Left cardiac atrium (tissue), 4 donors: ENCODE measurements at regions of chr21 and their contacts with region 1.

Region 1: DNA sequence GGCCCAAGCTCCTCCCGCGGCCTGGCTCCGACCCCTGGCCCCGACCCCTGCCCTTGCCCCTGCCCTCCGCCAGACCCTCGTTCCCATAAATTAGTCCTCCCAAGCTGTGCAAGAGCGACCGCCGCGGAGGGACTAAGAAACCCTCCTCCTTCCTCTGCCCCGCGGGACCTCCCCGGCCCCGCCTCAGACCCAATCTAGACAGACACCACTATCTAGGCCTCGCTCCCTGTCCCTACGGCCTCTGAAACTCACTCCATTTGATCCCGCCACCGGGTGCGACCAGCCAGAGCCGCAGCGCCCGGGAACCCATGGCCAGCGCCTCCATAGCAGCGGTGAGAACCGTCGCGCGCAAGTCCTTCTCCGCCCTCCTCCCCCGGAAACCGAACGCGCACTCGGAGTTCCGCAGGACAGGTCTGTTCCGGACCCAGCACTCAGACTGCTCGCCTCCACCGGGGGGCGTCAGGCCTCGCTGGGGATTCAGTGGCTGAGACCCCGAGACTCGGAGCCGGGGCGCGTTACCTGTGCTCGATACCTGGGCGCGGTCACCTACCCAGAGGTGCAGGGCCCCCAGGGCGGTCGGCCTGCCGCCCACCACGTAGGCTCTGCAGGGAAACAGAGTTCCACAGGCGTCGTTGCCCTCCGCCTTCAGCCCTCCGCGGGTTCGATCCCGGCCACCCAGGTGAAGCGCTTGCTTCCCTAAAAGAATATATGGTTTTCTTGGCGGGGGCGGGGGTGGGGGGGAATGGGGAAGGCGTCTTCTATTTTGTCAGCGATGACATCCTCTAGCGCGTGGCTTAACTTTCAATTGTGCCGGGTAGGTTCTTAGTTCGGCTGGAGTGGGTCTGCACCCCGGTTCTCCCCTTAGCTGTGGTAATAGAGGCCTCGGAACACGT is at the start of gene MRPL39:
- DNase-seq: peak; percentile 90
- ATAC-seq: peak; percentile 97 to 98
- total RNA-seq, gene MRPL39: 37.8 to 39.9 TPM

Region 2: DNA sequence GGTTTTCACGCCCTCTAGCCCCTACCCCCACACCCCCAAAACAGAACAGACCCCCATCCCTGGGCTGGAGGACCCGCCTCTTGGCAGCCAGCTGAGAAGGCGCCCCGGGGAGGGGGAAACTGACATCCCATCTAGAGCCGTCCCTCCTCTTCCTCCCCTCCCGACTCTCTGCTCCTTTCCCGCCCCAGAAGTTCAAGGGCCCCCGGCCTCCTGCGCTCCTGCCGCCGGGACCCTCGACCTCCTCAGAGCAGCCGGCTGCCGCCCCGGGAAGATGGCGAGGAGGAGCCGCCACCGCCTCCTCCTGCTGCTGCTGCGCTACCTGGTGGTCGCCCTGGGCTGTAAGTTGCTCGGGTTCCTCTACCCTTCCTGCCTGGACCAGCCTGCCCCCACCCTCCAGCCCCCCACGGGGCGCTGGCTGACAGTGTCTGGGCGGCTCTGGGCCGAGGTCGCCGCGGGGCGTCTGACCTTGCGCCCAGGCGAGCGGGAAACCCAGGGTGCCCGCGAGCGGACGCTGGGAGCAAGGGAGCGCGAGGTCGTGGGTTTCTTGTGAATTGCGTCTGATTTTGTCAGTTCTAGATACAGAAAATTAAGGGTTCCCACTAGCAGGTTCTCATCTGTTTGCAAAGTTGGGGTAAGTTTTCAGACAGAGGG is 32.3 kb after region 1 on chr21:
- intact Hi-C with region 1: loop called in 1 of 2 experiments (anchors 5 kb)
- DNase-seq: peak; percentile 61
- ATAC-seq: peak; percentile 83 to 90

Region 3: GRCh38 chr21:25708467-25709065 is 101.2 kb after region 1 on chr21:
- intact Hi-C with region 1: loop called (anchors 1 to 5 kb)
- DNase-seq: peak; percentile 42
- ATAC-seq: no peak

Region 4: GRCh38 chr21:25801217-25802014 is 194.0 kb after region 1 on chr21:
- intact Hi-C with region 1: loop called in 1 of 2 experiments (anchors 5 kb)
- DNase-seq: peak; percentile 86
- ATAC-seq: peak; percentile 94 to 98